Ovary (tissue), 10 donors: ENCODE measurements at regions of chr12 and their contacts with region 1.

Region 1: GRCh38 chr12:3988519-3989448 is 115.6 kb upstream of the PARP11 start:
- DNase-seq: no peak
- H3K4me3 ChIP-seq: no peak overlapping the region
- H3K27ac ChIP-seq: no peak overlapping the region
- H3K4me1 ChIP-seq: no peaks in the 10 kb centered on the region
- H3K27me3 ChIP-seq: no peaks in the 10 kb centered on the region
- CTCF ChIP-seq: no peak
- EP300 ChIP-seq: no peak
- POLR2A ChIP-seq: no peak

Region 2: DNA sequence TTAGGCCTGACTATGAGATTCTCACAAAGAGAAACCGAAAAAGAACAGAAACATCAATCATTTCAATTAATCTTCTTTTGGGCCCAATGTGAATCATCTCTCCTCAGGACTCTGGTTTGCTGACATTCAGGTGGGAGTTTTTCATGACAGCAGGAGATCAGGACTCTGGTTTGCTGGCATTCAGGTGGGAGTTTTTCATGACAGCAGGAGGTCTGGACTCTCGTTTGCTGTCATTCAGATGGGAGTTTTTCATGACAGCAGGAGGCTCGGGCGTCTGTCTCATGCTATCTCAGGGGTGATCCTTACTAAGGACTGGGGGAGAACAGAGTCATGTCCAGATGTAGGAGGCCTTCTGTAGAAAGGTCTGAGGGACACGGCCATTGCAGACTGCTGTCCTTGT is 75.5 kb before region 1 on chr12:
- intact Hi-C with region 1: loop called in 1 of 4 experiments (anchors 2 kb)
- DNase-seq: no peak
- H3K4me3 ChIP-seq: no peak overlapping the region
- H3K27ac ChIP-seq: no peak overlapping the region
- H3K4me1 ChIP-seq: no peaks in the 10 kb centered on the region
- H3K27me3 ChIP-seq: no peaks in the 10 kb centered on the region
- CTCF ChIP-seq: no peak
- EP300 ChIP-seq: no peak
- POLR2A ChIP-seq: no peak